ENCODE measurements at regions of chr10 and their contacts with region 1.

Region 1: GRCh38 chr10:69318106-69318866 is 40.0 kb downstream of the HK1 start:
- DNase-seq: peak; percentile 96
- ATAC-seq: peak; percentile 84
- H3K4me3 Mint-ChIP-seq: peak overlapping the region; percentile 91
- H3K27ac Mint-ChIP-seq: peak overlapping the region; percentile 92
- H3K4me1 Mint-ChIP-seq: peaks cover 37% of the 10 kb centered on the region
- H3K27me3 Mint-ChIP-seq: no peaks in the 10 kb centered on the region

Region 2: DNA sequence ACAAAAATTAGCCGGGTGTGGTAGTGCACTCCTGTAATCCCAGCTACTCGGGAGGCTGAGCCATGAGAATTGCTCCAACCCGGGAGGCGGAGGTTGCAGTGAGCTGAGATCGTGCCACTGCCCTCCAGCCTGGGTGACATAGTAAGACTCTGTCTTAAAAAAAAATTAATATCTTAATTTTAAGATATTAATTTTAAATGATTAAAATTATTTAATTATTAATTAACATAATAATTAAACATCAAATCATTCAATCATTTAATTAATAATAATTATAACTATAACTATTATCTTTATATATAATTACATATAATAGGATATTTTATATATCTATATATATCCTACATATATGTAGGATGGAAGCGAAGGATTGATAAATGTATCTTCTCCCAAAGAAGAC is 41.8 kb before region 1 on chr10:
- POLR2A ChIA-PET with region 1: no interaction called
- DNase-seq: no peak
- ATAC-seq: no peak
- H3K4me3 Mint-ChIP-seq: no peak overlapping the region
- H3K27ac Mint-ChIP-seq: no peak overlapping the region
- H3K4me1 Mint-ChIP-seq: no peaks in the 10 kb centered on the region
- H3K27me3 Mint-ChIP-seq: peaks cover 4% of the 10 kb centered on the region

Region 3: DNA sequence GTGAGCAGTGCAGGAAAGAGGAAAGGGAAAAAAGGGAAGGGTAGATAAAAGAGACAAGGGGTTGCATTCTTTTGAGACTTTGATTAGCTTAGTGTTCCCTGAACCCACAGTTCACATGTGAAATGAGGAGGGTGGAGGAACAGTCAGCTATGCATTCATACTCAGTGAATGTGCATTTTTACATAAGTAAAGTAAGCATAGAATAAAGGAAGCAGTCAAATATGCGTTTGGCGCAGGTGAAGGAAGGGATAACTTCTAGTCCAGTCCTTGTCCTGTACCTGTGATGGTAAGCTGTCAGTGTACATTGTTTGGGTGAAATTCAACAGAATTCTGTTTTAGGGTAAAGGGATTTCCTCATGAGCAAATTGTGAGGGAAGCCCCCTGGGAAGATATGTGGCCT is 11.9 kb before region 1 on chr10:
- POLR2A ChIA-PET with region 1: interaction called, 13 read pairs
- DNase-seq: no peak
- ATAC-seq: no peak
- H3K4me3 Mint-ChIP-seq: no peak overlapping the region
- H3K27ac Mint-ChIP-seq: no peak overlapping the region
- H3K4me1 Mint-ChIP-seq: peaks cover 2% of the 10 kb centered on the region
- H3K27me3 Mint-ChIP-seq: peaks cover 12% of the 10 kb centered on the region

Region 4: GRCh38 chr10:69344591-69345252 is 26.4 kb after region 1 on chr10:
- POLR2A ChIA-PET with region 1: interaction called, 10 read pairs
- DNase-seq: peak; percentile 52
- ATAC-seq: peak; percentile 75
- H3K4me3 Mint-ChIP-seq: peak overlapping the region; percentile 50
- H3K27ac Mint-ChIP-seq: peak overlapping the region; percentile 78
- H3K4me1 Mint-ChIP-seq: peaks cover 68% of the 10 kb centered on the region
- H3K27me3 Mint-ChIP-seq: no peaks in the 10 kb centered on the region

Region 5: GRCh38 chr10:69360485-69361324 is 42.4 kb after region 1 on chr10:
- POLR2A ChIA-PET with region 1: interaction called, 13 read pairs
- DNase-seq: no peak
- ATAC-seq: no peak
- H3K4me3 Mint-ChIP-seq: no peak overlapping the region
- H3K27ac Mint-ChIP-seq: peak overlapping the region; percentile 75
- H3K4me1 Mint-ChIP-seq: peaks cover 49% of the 10 kb centered on the region
- H3K27me3 Mint-ChIP-seq: no peaks in the 10 kb centered on the region